ENCODE measurements at regions of chr13 and their contacts with region 1.

Region 1: GRCh38 chr13:41085961-41086585 is 24.8 kb downstream of the WBP4 start:
- DNase-seq: no peak
- ATAC-seq: no peak
- H3K4me3 ChIP-seq: no peak overlapping the region
- H3K4me3 Mint-ChIP-seq: no peak overlapping the region
- H3K27ac ChIP-seq: no peak overlapping the region
- H3K27ac Mint-ChIP-seq: no peak overlapping the region
- H3K4me1 ChIP-seq: no peaks in the 10 kb centered on the region
- H3K4me1 Mint-ChIP-seq: peaks cover 5% of the 10 kb centered on the region
- H3K27me3 ChIP-seq: no peaks in the 10 kb centered on the region
- H3K27me3 Mint-ChIP-seq: no peaks in the 10 kb centered on the region
- CTCF ChIP-seq: no peak

Region 2: GRCh38 chr13:41111454-41111853 is 25.4 kb after region 1 on chr13:
- CTCF ChIA-PET with region 1: no interaction called
- POLR2A ChIA-PET with region 1: no interaction called
- intact Hi-C with region 1: loop called in 1 of 2 experiments (anchors 1 kb)
- DNase-seq: no peak
- ATAC-seq: no peak
- H3K4me3 ChIP-seq: no peak overlapping the region
- H3K4me3 Mint-ChIP-seq: no peak overlapping the region
- H3K27ac ChIP-seq: no peak overlapping the region
- H3K27ac Mint-ChIP-seq: no peak overlapping the region
- H3K4me1 ChIP-seq: no peaks in the 10 kb centered on the region
- H3K4me1 Mint-ChIP-seq: no peaks in the 10 kb centered on the region
- H3K27me3 ChIP-seq: no peaks in the 10 kb centered on the region
- H3K27me3 Mint-ChIP-seq: no peaks in the 10 kb centered on the region
- CTCF ChIP-seq: no peak

Region 3: GRCh38 chr13:41434831-41435520 is 348.9 kb after region 1 on chr13:
- CTCF ChIA-PET with region 1: no interaction called
- POLR2A ChIA-PET with region 1: no interaction called
- intact Hi-C with region 1: no loop called
- DNase-seq: no peak
- ATAC-seq: no peak
- H3K4me3 ChIP-seq: no peak overlapping the region
- H3K4me3 Mint-ChIP-seq: no peak overlapping the region
- H3K27ac ChIP-seq: no peak overlapping the region
- H3K27ac Mint-ChIP-seq: no peak overlapping the region
- H3K4me1 ChIP-seq: no peaks in the 10 kb centered on the region
- H3K4me1 Mint-ChIP-seq: no peaks in the 10 kb centered on the region
- H3K27me3 ChIP-seq: no peaks in the 10 kb centered on the region
- H3K27me3 Mint-ChIP-seq: no peaks in the 10 kb centered on the region
- CTCF ChIP-seq: no peak

Measured in CD4-positive, alpha-beta T cell (primary cell).